Activated T-helper 2 cell treated with anti-CD3 and anti-CD28 coated beads, Interferon-gamma antibody, Interleukin-2, Interleukin-4, amounts not matched to agents 10 μg/mL and 5 μg/mL and 100 μg/mL, durations not matched to agents 14 hours and 24 hours and 36 hours (primary cell): ENCODE measurements at regions of chr19 and their contacts with region 1.

Region 1: DNA sequence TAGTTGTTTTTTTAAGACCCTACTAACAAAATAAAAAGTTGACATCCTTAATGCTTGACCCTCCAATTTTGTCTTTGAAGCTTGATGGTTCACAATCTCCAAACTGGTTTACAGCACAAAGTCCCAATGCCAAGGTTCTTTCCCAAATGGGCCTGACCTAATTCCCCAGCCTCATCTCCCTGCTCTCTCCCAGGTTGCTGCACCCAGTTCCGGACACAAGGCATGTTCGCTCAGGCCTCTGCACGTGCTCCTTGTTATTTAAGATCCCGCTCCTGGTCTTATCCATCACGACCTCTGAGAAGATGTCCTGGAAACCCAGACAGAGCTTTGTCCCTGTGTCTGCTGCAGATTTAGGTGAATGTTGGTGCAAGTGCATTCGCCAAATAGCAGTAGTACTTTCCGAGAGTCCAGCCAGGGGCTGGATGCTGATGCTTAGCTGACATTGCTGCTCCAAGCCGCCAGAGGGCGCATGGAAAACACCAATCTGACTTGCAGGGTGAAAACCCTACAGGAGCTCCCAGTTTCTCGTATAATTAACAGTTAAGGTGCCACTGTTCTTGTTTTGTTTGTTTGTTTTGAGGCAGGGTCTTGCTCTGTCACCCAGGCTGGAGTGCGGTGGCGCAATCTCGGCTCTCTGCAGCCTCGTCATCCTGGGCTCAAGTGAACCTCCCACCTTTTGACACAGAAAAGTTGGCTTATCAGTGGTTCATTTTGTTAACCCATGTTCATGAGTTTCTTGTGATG is 18.5 kb downstream of the LYPD3 start:
- DNase-seq: peak; percentile 67
- H3K4me3 Mint-ChIP-seq: no peak overlapping the region
- H3K27ac Mint-ChIP-seq: no peak overlapping the region
- H3K4me1 Mint-ChIP-seq: peaks cover 16% of the 10 kb centered on the region
- H3K27me3 Mint-ChIP-seq: no peaks in the 10 kb centered on the region

Region 2: GRCh38 chr19:43503501-43504425 is 56.8 kb after region 1 on chr19:
- intact Hi-C with region 1: loop called (anchors 5 kb)
- DNase-seq: peak; percentile 96
- H3K4me3 Mint-ChIP-seq: peak overlapping the region; percentile 87
- H3K27ac Mint-ChIP-seq: peak overlapping the region; percentile 93
- H3K4me1 Mint-ChIP-seq: peaks cover 20% of the 10 kb centered on the region
- H3K27me3 Mint-ChIP-seq: no peaks in the 10 kb centered on the region

Region 3: DNA sequence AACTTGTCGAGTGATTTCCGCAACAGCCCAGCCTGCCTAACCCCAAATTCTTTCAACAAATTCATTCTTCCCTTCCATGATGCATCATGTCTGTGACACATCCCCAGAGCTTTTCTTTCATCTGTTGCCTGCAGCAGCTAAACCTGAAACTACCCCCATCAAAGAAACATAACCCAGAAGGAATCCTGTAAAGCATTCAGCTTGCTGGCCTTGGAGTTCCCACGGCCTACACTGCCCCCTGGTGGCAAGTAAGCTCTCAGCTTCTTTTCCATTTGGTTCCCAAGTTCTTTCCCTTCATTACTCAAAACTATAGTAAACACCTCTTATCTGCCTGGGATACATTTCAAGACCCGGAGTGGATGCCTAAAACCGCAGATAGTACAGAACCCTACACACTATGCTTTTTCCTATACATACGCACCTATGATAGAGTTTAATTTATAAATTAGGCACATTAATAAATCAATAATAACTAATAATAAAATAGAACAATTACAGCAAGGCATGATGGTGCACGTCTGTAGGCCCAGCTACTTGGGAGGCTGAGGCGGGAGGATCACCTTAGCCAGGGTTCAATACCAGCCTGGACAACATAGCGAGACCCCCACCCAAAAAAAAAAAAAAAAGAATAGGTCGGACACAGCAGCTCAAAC is 72.6 kb after region 1 on chr19:
- intact Hi-C with region 1: loop called (anchors 1 kb)
- DNase-seq: peak; percentile 65
- H3K4me3 Mint-ChIP-seq: no peak overlapping the region
- H3K27ac Mint-ChIP-seq: peak overlapping the region; percentile 17
- H3K4me1 Mint-ChIP-seq: peaks cover 7% of the 10 kb centered on the region
- H3K27me3 Mint-ChIP-seq: no peaks in the 10 kb centered on the region

Region 4: GRCh38 chr19:43651758-43652545 is 205.0 kb after region 1 on chr19:
- intact Hi-C with region 1: loop called (anchors 1 kb)
- DNase-seq: peak; percentile 37
- H3K4me3 Mint-ChIP-seq: no peak overlapping the region
- H3K27ac Mint-ChIP-seq: no peak overlapping the region
- H3K4me1 Mint-ChIP-seq: peaks cover 2% of the 10 kb centered on the region
- H3K27me3 Mint-ChIP-seq: no peaks in the 10 kb centered on the region